Transverse colon (tissue), 4 donors: ENCODE measurements at regions of chr17 and their contacts with region 1.

Region 1: DNA sequence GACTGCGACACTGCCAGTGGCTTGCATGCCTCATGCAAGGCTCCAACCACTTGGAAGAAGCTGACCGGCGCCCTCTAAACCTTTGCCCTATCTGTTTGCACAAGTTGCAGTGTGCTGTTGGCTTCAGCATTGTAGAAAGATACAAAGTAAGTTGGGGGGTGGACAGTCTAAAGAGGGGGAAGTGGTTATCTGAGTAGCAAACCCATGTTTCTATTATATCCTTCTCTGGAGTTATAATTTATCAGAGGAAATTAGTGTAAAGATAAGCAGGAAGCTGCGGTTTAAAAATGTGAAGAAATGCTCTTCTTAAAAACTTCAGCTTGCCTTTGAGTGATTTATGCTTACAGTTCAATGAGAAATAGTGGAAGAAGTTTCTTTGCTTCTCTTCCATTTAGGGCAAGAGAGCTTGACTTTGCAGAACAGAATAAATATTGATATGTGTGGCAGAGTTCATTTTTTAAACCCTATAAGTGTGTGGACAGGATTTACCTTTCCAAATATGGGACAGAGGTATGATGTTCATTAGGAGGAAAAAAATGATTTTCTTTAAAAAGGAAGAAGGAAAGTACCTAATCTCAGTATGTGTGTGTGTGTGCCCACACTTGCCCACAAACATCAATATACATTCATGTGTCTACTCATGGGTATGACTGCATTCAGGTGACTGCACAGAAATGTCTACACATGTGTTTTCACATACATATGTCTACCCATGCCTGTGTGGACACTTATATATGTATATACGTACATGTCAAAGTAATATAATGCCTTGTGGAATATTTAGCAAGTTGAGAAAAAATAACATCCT is 8.1 kb downstream of the AMZ2 start:
- DNase-seq: no peak
- H3K4me3 ChIP-seq: no peak overlapping the region
- H3K27ac ChIP-seq: peak overlapping the region in 1 of 4 donors; percentile 18
- H3K4me1 ChIP-seq: peaks cover 0 to 15% (median 3%) of the 10 kb centered on the region in 4 donors
- H3K27me3 ChIP-seq: no peaks in the 10 kb centered on the region
- CTCF ChIP-seq: no peak
- EP300 ChIP-seq: no peak
- POLR2A ChIP-seq: no peak

Region 2: GRCh38 chr17:68273722-68274121 is 17.8 kb after region 1 on chr17:
- in situ Hi-C with region 1: no loop called
- intact Hi-C with region 1: no loop called
- DNase-seq: no peak
- H3K4me3 ChIP-seq: no peak overlapping the region
- H3K27ac ChIP-seq: no peak overlapping the region
- H3K4me1 ChIP-seq: no peaks in the 10 kb centered on the region
- H3K27me3 ChIP-seq: no peaks in the 10 kb centered on the region
- CTCF ChIP-seq: no peak
- EP300 ChIP-seq: no peak
- POLR2A ChIP-seq: no peak

Region 3: GRCh38 chr17:68435876-68436842 is 180.2 kb after region 1 on chr17:
- in situ Hi-C with region 1: loop called in 2 of 4 experiments (anchors 10 kb)
- intact Hi-C with region 1: no loop called
- DNase-seq: peak; percentile 84
- H3K4me3 ChIP-seq: no peak overlapping the region
- H3K27ac ChIP-seq: peak overlapping the region in 2 of 4 donors; percentile 2 to 33
- H3K4me1 ChIP-seq: peaks cover 0 to 35% (median 19%) of the 10 kb centered on the region in 4 donors
- H3K27me3 ChIP-seq: no peaks in the 10 kb centered on the region
- CTCF ChIP-seq: peak; percentile 86 to 95 (median 91)
- EP300 ChIP-seq: no peak
- POLR2A ChIP-seq: no peak

Region 4: DNA sequence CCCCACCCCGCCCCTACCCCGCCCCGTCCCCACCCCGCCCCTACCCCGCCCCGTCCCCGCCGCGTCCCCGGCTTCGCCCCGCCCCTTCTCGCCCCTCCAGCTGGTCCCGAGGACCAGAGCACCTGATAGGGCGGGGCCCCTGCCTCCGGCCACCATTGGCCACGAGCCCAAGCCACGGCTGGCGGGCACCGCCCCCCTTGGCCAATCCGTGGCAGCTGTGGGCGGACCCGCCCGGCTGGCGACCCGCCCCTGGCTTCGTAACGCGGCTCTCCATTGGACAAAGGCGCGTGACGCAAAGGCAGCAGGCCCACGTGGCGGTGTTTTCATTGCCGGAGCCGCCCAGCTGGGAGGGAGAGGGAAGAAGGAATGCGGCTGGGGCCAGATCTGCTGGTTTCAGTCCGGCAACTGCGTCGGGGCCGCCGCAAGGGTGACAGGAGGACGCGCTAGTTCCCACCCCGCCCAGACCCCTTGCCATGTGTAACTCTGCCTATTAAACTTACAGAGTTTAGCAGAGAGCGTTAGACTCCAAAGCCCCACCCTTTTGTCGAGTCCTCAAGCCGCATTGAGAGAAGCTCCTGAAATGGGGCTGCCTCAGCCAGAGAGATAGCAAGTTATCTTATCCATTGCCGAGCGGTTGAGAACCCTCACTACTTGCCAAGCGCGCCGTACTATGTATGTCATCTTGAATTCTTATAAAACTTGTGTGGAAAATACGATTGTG is 201.8 kb after region 1 on chr17:
- in situ Hi-C with region 1: loop called in 3 of 4 experiments (anchors 5 to 10 kb)
- intact Hi-C with region 1: loop called (anchors 5 kb)
- DNase-seq: peak; percentile 99
- H3K4me3 ChIP-seq: peak overlapping the region; percentile 40 to 89 (median 76)
- H3K27ac ChIP-seq: peak overlapping the region; percentile 96 to 99 (median 98)
- H3K4me1 ChIP-seq: peaks cover 15 to 54% (median 34%) of the 10 kb centered on the region in 4 donors
- H3K27me3 ChIP-seq: no peaks in the 10 kb centered on the region
- CTCF ChIP-seq: peak in 2 of 5 experiments; percentile 27 to 32
- EP300 ChIP-seq: no peak
- POLR2A ChIP-seq: peak; percentile 85